Motor neuron (in vitro differentiated cells): ENCODE measurements at regions of chr13 and their contacts with region 1.

Region 1: GRCh38 chr13:107211073-107211472 is 643.1 kb upstream of the ARGLU1 start:
- ATAC-seq: peak; percentile 98 to 99 (median 99)
- H3K4me3 ChIP-seq: peak overlapping the region in 1 of 5 donors; percentile 8
- H3K27ac ChIP-seq: no peak overlapping the region
- H3K4me1 ChIP-seq: peaks cover 3 to 5% of the 10 kb centered on the region in 2 donors

Region 2: GRCh38 chr13:106858908-106859904 is 351.9 kb before region 1 on chr13:
- in situ Hi-C with region 1: no loop called
- ATAC-seq: no peak
- H3K4me3 ChIP-seq: no peak overlapping the region
- H3K27ac ChIP-seq: no peak overlapping the region
- H3K4me1 ChIP-seq: peaks cover 0 to 9% of the 10 kb centered on the region in 2 donors

Region 3: GRCh38 chr13:107373551-107373950 is 162.5 kb after region 1 on chr13:
- in situ Hi-C with region 1: loop called in 2 of 9 experiments (anchors 25 kb)
- ATAC-seq: peak; percentile 50 to 72 (median 62)
- H3K4me3 ChIP-seq: no peak overlapping the region
- H3K27ac ChIP-seq: no peak overlapping the region
- H3K4me1 ChIP-seq: peaks cover 7 to 16% of the 10 kb centered on the region in 2 donors

Region 4: GRCh38 chr13:107650081-107650701 is 439.1 kb after region 1 on chr13:
- in situ Hi-C with region 1: loop called in 3 of 9 experiments (anchors 25 kb)
- ATAC-seq: peak; percentile 45 to 94 (median 70)
- H3K4me3 ChIP-seq: no peak overlapping the region
- H3K27ac ChIP-seq: no peak overlapping the region
- H3K4me1 ChIP-seq: no peaks in the 10 kb centered on the region

Region 5: DNA sequence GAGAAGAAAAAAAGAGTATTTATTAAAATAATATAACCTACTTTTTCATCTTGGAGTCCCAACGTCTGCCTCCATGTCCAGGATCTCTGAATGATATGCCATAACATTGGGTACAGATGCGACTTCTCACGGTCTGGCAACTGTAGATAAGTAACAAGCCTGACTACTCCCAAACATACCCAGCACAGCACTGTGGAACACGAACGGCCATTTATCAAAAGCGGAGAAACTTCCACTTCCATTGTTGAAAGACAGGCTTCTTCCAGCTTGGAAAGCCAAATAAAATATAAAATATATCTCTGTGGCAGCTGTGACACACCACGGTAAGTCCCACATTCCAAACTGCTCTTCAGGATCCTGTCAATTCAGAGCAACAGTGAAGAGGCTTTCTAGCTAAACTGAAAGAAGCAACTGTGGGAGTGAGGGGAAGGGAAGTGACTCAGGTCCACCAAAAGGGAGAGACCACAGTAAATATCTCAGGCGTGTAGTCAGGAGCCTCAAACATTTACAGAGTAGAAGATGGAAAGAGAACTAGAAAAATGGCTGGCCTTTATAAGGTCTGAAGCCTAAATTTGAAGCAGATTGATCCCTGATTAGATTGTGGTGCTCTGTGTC is 672.6 kb after region 1 on chr13:
- in situ Hi-C with region 1: loop called in 1 of 9 experiments (anchors 25 kb)
- ATAC-seq: no peak
- H3K4me3 ChIP-seq: no peak overlapping the region
- H3K27ac ChIP-seq: peak overlapping the region; percentile 30 to 59
- H3K4me1 ChIP-seq: no peaks in the 10 kb centered on the region